ENCODE measurements at regions of chr16 and their contacts with region 1.

Region 1: GRCh38 chr16:89344846-89345611 is 127.5 kb downstream of the ZNF778 start:
- DNase-seq: no peak
- ATAC-seq: peak; percentile 24 to 66 (median 46)
- H3K4me3 ChIP-seq: no peak overlapping the region
- H3K27ac ChIP-seq: peak overlapping the region in 1 of 10 donors; percentile 37
- H3K4me1 ChIP-seq: peaks cover 18 to 49% (median 24%) of the 10 kb centered on the region in 9 donors
- H3K27me3 ChIP-seq: no peaks in the 10 kb centered on the region
- CTCF ChIP-seq: peak in 2 of 9 donors; percentile 10

Region 2: DNA sequence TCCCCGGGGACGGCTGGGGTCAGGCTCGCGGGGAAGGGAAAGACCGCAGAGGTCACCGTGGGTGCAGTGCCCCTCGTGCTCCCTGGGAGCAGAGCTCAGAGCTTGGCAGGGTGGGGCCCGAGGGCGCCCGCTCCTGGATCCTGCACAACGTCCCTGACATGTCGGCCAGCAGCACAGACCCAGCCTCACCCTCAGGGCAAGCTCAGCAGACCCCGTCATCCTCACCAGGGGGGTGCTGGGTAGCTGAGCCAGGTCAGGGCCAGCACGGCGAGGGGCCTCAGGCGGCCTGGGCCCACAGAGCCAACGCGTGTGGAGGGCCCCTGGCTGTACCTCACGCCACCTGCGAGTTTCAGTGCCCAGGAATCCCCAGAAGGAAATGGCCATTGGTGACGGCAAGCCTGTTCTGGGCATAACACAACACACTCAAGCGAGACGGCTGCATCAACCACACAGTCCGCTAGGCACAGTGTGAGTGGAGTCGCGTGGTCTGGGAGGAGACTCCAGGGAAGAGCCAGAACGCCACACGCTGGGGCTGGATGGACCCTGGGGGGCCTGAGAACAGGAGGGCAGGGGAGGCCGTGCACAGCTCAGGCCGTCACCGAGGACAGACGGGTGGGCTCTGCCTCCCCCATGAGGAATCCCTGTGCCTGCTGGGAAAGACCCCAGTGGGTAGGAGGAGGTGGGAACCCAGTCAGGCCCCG is 67.2 kb before region 1 on chr16:
- intact Hi-C with region 1: no loop called
- DNase-seq: no peak
- ATAC-seq: peak in 2 of 8 donors; percentile 13 to 48
- H3K4me3 ChIP-seq: no peak overlapping the region
- H3K27ac ChIP-seq: no peak overlapping the region
- H3K4me1 ChIP-seq: peaks cover 0 to 8% (median 0%) of the 10 kb centered on the region in 9 donors
- H3K27me3 ChIP-seq: no peaks in the 10 kb centered on the region
- CTCF ChIP-seq: no peak

Region 3: GRCh38 chr16:89300311-89300975 is 44.6 kb before region 1 on chr16:
- intact Hi-C with region 1: no loop called
- DNase-seq: peak in 1 of 2 donors; percentile 62
- ATAC-seq: peak; percentile 26 to 87 (median 78)
- H3K4me3 ChIP-seq: no peak overlapping the region
- H3K27ac ChIP-seq: peak overlapping the region; percentile 67 to 91 (median 84)
- H3K4me1 ChIP-seq: peaks cover 15 to 63% (median 34%) of the 10 kb centered on the region in 9 donors
- H3K27me3 ChIP-seq: no peaks in the 10 kb centered on the region
- CTCF ChIP-seq: peak in 5 of 9 donors; percentile 9 to 21 (median 11)

Region 4: GRCh38 chr16:89386306-89387185 is 41.5 kb after region 1 on chr16:
- intact Hi-C with region 1: loop called in 1 of 10 experiments (anchors 5 kb)
- DNase-seq: no peak
- ATAC-seq: no peak
- H3K4me3 ChIP-seq: no peak overlapping the region
- H3K27ac ChIP-seq: no peak overlapping the region
- H3K4me1 ChIP-seq: peaks cover 21 to 63% (median 47%) of the 10 kb centered on the region in 9 donors
- H3K27me3 ChIP-seq: no peaks in the 10 kb centered on the region
- CTCF ChIP-seq: no peak

Region 5: GRCh38 chr16:89545831-89546574 is 201.0 kb after region 1 on chr16:
- intact Hi-C with region 1: no loop called
- DNase-seq: no peak
- ATAC-seq: no peak
- H3K4me3 ChIP-seq: no peak overlapping the region
- H3K27ac ChIP-seq: no peak overlapping the region
- H3K4me1 ChIP-seq: peaks cover 0 to 9% (median 0%) of the 10 kb centered on the region in 9 donors
- H3K27me3 ChIP-seq: no peaks in the 10 kb centered on the region
- CTCF ChIP-seq: no peak